Right ventricle myocardium superior (tissue), 1 donor: ENCODE measurements at regions of chr4 and their contacts with region 1.

Region 1: DNA sequence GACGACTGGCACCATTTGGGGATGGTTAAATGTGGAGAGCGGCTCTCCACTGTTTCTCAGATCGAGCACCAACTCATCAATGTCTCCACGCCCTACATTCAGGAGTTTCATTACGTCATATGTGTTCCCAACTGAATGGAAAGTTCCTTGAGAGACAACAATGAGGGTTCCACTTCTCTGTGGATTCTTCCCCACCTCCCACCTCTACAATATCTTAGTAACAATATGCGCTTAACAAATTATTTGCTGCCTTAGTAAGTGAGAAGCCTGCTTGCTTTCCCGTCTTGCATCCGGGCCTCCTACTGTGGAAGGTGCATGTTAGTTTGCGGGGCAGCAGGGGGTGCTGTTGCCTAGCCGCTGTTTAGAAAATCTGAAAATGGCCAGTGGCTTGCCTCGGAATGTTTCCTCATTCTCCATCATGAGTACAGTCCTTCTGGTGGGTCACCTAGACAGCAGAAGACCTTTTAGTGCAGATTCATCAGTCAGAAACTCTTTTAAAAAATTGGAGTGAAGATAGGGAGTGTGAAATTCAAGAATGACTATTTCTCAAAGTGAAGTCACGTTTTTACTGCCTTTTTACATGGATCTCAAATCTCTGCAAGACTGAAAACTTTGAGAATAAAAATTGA is 55.7 kb downstream of the PHOX2B start:
- DNase-seq: peak; percentile 45
- ATAC-seq: peak; percentile 79

Region 2: DNA sequence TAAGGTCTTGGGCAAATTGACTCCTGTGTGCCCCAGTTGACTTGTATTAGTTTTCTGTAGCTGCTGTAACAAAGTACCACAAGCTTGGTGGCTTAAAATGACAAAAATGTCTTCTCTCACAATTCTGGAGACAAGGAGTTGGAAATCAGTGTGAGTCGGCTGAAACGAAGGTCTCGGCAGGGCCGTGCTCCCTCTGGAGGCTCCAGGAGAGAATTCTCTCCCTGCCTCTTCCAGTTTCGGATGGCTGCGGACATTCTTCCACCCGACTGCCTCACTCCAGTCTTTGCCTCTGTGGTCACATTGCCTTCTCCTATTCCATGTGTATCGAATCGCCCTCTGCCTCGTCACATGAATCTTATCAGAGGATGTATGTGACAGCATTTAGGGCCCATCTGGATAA is 121.7 kb after region 1 on chr4:
- intact Hi-C with region 1: loop called (anchors 10 kb)
- DNase-seq: peak; percentile 42
- ATAC-seq: peak; percentile 60

Region 3: GRCh38 chr4:41887821-41888686 is 195.2 kb after region 1 on chr4:
- intact Hi-C with region 1: loop called (anchors 5 kb)
- DNase-seq: no peak
- ATAC-seq: no peak

Region 4: GRCh38 chr4:42018451-42018850 is 325.6 kb after region 1 on chr4:
- intact Hi-C with region 1: no loop called
- DNase-seq: no peak
- ATAC-seq: no peak